Activated T-helper 2 cell treated with anti-CD3 and anti-CD28 coated beads, Interferon-gamma antibody, Interleukin-2, Interleukin-4, amounts not matched to agents 10 μg/mL and 5 μg/mL and 100 μg/mL, durations not matched to agents 14 hours and 24 hours and 36 hours (primary cell): ENCODE measurements at regions of chr16 and their contacts with region 1.

Region 1: GRCh38 chr16:80580109-80580832 is 39.5 kb downstream of the DYNLRB2 start:
- DNase-seq: peak; percentile 76
- H3K4me3 Mint-ChIP-seq: peak overlapping the region; percentile 82
- H3K27ac Mint-ChIP-seq: peak overlapping the region; percentile 99
- H3K4me1 Mint-ChIP-seq: peaks cover 51% of the 10 kb centered on the region
- H3K27me3 Mint-ChIP-seq: no peaks in the 10 kb centered on the region

Region 2: GRCh38 chr16:79269211-79269863 is 1310.9 kb before region 1 on chr16:
- intact Hi-C with region 1: loop called (anchors 5 kb)
- DNase-seq: peak; percentile 68
- H3K4me3 Mint-ChIP-seq: peak overlapping the region; percentile 38
- H3K27ac Mint-ChIP-seq: peak overlapping the region; percentile 87
- H3K4me1 Mint-ChIP-seq: peaks cover 89% of the 10 kb centered on the region
- H3K27me3 Mint-ChIP-seq: no peaks in the 10 kb centered on the region

Region 3: DNA sequence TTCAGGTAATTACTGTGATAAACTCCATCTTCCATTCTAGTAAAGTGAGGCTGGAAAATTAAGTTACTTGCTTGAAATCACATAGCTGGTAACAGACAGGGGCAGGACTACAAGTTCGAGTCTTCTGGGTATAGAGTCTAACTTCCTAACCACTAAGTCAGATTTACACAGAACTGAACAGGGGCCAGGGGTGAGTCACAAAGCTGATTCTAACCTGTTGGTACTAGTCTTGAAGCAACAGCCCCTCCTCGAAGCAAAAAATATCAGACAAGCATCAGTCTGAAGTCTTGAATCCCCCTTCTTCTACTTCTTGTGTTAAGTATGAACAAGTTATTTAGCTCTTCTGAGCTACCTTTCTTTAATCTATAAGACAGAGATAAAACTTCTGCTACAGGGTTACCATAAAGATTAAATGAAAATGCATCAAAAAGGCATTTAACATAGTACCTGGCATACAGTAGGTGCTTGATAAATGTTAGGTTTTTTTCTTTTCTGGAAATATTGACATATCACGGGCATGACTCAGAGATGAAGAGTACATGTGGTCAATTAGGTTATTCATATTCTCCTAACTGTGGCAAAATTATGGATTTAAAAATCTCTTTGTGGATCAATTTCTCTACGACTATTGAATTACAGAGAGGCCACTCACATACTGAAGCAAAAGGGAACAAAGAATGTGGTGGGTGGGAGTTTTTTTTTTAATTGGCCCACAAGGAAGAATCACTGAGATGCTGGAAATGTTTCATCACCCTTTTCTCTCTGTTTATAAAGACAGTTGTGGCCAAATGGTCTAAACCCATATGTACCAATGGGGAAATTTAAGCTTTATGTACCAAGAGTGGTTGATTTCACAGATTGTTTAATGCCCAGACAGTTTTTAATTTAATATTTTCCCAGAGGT is 306.4 kb before region 1 on chr16:
- intact Hi-C with region 1: no loop called
- DNase-seq: no peak
- H3K4me3 Mint-ChIP-seq: no peak overlapping the region
- H3K27ac Mint-ChIP-seq: peak overlapping the region; percentile 63
- H3K4me1 Mint-ChIP-seq: peaks cover 9% of the 10 kb centered on the region
- H3K27me3 Mint-ChIP-seq: no peaks in the 10 kb centered on the region

Region 4: GRCh38 chr16:80540516-80541272 is 39.6 kb before region 1 on chr16 and contains the start of gene DYNLRB2:
- intact Hi-C with region 1: loop called (anchors 1 kb)
- DNase-seq: peak; percentile 90
- H3K4me3 Mint-ChIP-seq: peak within 1 kb of the TSS; percentile 88
- H3K27ac Mint-ChIP-seq: peak within 1 kb of the TSS; percentile 93
- H3K4me1 Mint-ChIP-seq: peaks cover 28% of the 10 kb centered on the region
- H3K27me3 Mint-ChIP-seq: peaks cover 13% of the 10 kb centered on the region
- total RNA-seq, gene DYNLRB2: not detected in 2 replicates

Region 5: DNA sequence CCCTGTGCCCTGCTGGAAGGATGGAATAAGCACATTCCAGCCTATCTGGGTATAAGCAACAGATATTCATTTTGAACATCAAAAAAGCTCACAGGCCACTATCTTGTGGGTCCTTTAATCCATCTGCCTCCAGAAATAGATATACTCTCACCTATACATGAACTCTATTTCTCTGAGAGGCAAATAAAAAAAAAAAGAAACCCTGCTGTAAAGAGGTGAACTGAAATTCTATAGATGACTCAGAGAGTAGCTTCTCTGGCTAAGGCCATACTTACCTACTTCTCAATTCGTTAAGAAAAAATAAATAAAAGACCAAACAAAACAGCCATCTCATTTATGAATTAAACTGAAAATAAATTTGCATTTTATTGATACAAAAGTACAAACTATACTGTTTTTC is 46.8 kb after region 1 on chr16:
- intact Hi-C with region 1: no loop called
- DNase-seq: no peak
- H3K4me3 Mint-ChIP-seq: no peak overlapping the region
- H3K27ac Mint-ChIP-seq: no peak overlapping the region
- H3K4me1 Mint-ChIP-seq: peaks cover 3% of the 10 kb centered on the region
- H3K27me3 Mint-ChIP-seq: no peaks in the 10 kb centered on the region

Region 6: DNA sequence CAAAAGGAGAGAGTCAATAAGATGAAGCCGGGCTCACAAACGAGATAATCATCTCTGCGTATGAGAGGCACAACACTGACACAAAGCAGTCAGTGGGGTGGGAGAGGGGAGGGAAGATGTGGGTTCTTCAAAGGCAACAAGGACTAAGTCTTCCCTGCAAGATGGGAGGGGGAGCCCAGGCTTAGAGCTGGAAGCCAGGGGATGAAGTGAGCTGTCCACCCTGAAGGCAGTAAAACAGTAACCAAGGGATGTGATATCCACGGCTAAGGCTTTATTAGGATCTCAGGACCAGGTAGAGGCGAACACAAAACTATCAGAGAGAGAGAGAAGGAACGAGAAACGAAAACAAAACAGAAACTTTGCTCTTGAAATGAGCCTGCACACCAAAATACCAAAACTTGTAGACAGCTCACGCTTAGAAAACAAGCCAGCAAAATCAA is 76.5 kb after region 1 on chr16:
- intact Hi-C with region 1: loop called (anchors 1 kb)
- DNase-seq: peak; percentile 53
- H3K4me3 Mint-ChIP-seq: peak overlapping the region; percentile 81
- H3K27ac Mint-ChIP-seq: peak overlapping the region; percentile 75
- H3K4me1 Mint-ChIP-seq: peaks cover 34% of the 10 kb centered on the region
- H3K27me3 Mint-ChIP-seq: peaks cover 3% of the 10 kb centered on the region

Region 7: DNA sequence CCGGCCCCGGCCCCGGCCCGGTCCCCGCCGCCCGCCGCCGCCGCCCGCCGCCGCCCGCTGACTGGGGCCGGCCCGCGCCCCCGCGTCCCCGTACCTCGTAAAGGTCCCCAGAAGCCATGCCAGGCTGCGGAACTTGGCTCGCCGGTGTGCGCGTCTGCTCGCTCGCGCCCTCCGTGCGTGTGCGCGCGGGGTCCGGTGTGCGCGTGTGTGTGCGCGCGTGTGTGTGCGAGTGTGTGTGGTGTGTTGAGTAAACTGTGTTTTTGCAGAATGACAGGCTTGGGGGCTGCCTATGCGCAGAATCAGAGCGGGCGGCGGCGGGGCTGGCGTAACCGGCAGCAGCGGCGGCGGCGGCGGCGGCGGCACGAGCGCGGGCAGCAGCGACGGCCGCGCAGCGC is 223.8 kb after region 1 on chr16:
- intact Hi-C with region 1: loop called (anchors 1 kb)
- DNase-seq: peak; percentile 53
- H3K4me3 Mint-ChIP-seq: peak overlapping the region; percentile 94
- H3K27ac Mint-ChIP-seq: peak overlapping the region; percentile 90
- H3K4me1 Mint-ChIP-seq: peaks cover 49% of the 10 kb centered on the region
- H3K27me3 Mint-ChIP-seq: no peaks in the 10 kb centered on the region